CD4-positive, alpha-beta T cell (primary cell): ENCODE measurements at regions of chr16 and their contacts with region 1.

Region 1: GRCh38 chr16:71537643-71538042 is 11.4 kb downstream of the CHST4 start:
- DNase-seq: peak in 11 of 14 experiments; percentile 2 to 53 (median 15)
- ATAC-seq: peak; percentile 54
- H3K4me3 ChIP-seq: no peak overlapping the region
- H3K4me3 Mint-ChIP-seq: no peak overlapping the region
- H3K27ac ChIP-seq: no peak overlapping the region
- H3K27ac Mint-ChIP-seq: no peak overlapping the region
- H3K4me1 ChIP-seq: peaks cover 3% of the 10 kb centered on the region
- H3K4me1 Mint-ChIP-seq: no peaks in the 10 kb centered on the region
- H3K27me3 ChIP-seq: peaks cover 0 to 3% of the 10 kb centered on the region in 2 experiments
- H3K27me3 Mint-ChIP-seq: peaks cover 11% of the 10 kb centered on the region
- CTCF ChIP-seq: peak; percentile 42

Region 2: DNA sequence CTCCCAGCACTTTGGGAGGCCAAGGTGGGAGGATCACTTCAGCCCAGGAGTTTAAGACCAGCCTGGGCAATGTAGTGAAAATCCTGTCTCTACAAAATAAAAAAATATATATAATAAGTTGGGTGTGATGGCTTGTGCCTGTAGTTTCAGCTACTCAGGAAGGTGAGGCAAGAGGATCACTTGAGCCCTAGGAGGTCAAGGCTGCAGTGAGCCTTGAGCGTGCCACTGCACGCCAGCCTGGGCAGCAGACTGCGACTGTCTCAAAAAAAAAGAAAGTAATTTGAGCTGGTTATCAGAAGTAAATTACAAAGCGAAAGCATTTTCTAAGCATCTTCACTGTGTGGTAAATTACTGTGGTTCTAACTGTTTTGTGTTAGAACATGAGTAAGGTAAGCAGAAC is 1877.5 kb before region 1 on chr16:
- CTCF ChIA-PET with region 1: no interaction called
- POLR2A ChIA-PET with region 1: no interaction called
- intact Hi-C with region 1: no loop called
- DNase-seq: no peak
- ATAC-seq: no peak
- H3K4me3 ChIP-seq: no peak overlapping the region
- H3K4me3 Mint-ChIP-seq: no peak overlapping the region
- H3K27ac ChIP-seq: no peak overlapping the region
- H3K27ac Mint-ChIP-seq: no peak overlapping the region
- H3K4me1 ChIP-seq: no peaks in the 10 kb centered on the region
- H3K4me1 Mint-ChIP-seq: no peaks in the 10 kb centered on the region
- H3K27me3 ChIP-seq: no peaks in the 10 kb centered on the region
- H3K27me3 Mint-ChIP-seq: no peaks in the 10 kb centered on the region
- CTCF ChIP-seq: no peak

Region 3: DNA sequence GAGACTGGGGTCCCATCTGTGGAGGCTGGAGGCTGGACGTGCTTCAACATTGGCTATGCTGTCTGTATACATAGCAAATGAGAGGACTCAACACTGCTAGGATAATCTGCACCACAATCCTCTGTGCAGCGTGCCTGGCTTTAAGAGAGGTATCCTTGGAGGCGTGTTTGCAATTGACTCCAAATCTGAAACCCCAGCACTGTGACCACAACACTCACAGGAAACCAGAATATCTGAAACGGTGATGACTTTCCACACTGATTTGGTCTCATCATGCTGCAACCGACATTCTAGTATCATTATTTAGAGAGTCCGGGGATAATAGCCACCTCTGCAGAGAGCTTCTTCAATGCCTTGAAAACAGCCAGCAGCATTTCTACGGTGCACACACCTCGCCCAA is 130.9 kb before region 1 on chr16:
- CTCF ChIA-PET with region 1: no interaction called
- POLR2A ChIA-PET with region 1: no interaction called
- intact Hi-C with region 1: no loop called
- DNase-seq: no peak
- ATAC-seq: no peak
- H3K4me3 ChIP-seq: no peak overlapping the region
- H3K4me3 Mint-ChIP-seq: no peak overlapping the region
- H3K27ac ChIP-seq: no peak overlapping the region
- H3K27ac Mint-ChIP-seq: no peak overlapping the region
- H3K4me1 ChIP-seq: peaks cover 5% of the 10 kb centered on the region
- H3K4me1 Mint-ChIP-seq: no peaks in the 10 kb centered on the region
- H3K27me3 ChIP-seq: peaks cover 10 to 26% of the 10 kb centered on the region in 2 experiments
- H3K27me3 Mint-ChIP-seq: peaks cover 57% of the 10 kb centered on the region
- CTCF ChIP-seq: no peak

Region 4: GRCh38 chr16:71610936-71611871 is 73.6 kb after region 1 on chr16:
- CTCF ChIA-PET with region 1: no interaction called
- POLR2A ChIA-PET with region 1: no interaction called
- intact Hi-C with region 1: loop called in 1 of 2 experiments (anchors 1 kb)
- DNase-seq: peak; percentile 58 to 86 (median 72)
- ATAC-seq: peak; percentile 93
- H3K4me3 ChIP-seq: no peak overlapping the region
- H3K4me3 Mint-ChIP-seq: no peak overlapping the region
- H3K27ac ChIP-seq: no peak overlapping the region
- H3K27ac Mint-ChIP-seq: no peak overlapping the region
- H3K4me1 ChIP-seq: peaks cover 6% of the 10 kb centered on the region
- H3K4me1 Mint-ChIP-seq: no peaks in the 10 kb centered on the region
- H3K27me3 ChIP-seq: peaks cover 4 to 5% of the 10 kb centered on the region in 2 experiments
- H3K27me3 Mint-ChIP-seq: peaks cover 34% of the 10 kb centered on the region
- CTCF ChIP-seq: peak; percentile 92